ENCODE measurements at regions of chr5 and their contacts with region 1.

Region 1: GRCh38 chr5:149371296-149371962 is 7.7 kb downstream of the IL17B start:
- DNase-seq: peak; percentile 79
- ATAC-seq: peak; percentile 90
- H3K4me3 ChIP-seq: no peak overlapping the region
- H3K27ac ChIP-seq: no peak overlapping the region
- H3K4me1 ChIP-seq: no peaks in the 10 kb centered on the region
- H3K27me3 ChIP-seq: no peaks in the 10 kb centered on the region
- CTCF ChIP-seq: peak; percentile 79

Region 2: DNA sequence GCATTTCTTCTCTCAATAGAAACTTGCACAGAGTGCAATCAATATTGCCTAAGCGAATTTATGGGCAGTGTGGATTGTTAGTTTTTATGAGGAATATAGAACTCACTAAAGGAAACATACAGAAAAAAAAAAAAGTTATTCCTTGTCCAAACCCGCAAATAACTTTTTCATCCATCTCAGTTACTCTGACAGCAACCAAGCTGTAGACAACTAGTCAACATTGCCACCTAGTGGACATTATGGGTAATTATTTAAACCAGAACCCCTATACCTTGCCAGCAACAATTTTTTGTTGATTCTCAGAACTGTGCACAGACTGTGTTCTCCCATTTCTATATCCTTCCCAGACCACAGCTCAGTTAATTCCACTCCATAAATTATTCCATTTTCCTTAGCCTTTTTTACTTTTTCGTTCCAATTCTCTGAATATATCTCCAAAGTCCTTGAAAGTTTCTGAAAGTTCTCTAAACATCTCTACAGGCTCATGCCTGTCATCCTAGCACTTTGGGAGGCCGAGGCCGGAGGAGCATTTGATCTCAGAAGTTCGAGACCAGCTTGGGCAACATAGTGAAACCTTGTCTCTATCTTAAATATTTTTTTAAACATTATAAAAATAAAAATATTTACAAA is 102.4 kb before region 1 on chr5:
- intact Hi-C with region 1: loop called (anchors 10 kb)
- DNase-seq: no peak
- ATAC-seq: peak; percentile 45
- H3K4me3 ChIP-seq: no peak overlapping the region
- H3K27ac ChIP-seq: no peak overlapping the region
- H3K4me1 ChIP-seq: peaks cover 7% of the 10 kb centered on the region
- H3K27me3 ChIP-seq: peaks cover 6% of the 10 kb centered on the region
- CTCF ChIP-seq: peak; percentile 81

Region 3: GRCh38 chr5:149317281-149318048 is 54.0 kb before region 1 on chr5:
- intact Hi-C with region 1: loop called (anchors 5 kb)
- DNase-seq: no peak
- ATAC-seq: peak; percentile 42
- H3K4me3 ChIP-seq: no peak overlapping the region
- H3K27ac ChIP-seq: no peak overlapping the region
- H3K4me1 ChIP-seq: peaks cover 11% of the 10 kb centered on the region
- H3K27me3 ChIP-seq: no peaks in the 10 kb centered on the region
- CTCF ChIP-seq: peak; percentile 80